B cell (primary cell): ENCODE measurements at regions of chr5 and their contacts with region 1.

Region 1: DNA sequence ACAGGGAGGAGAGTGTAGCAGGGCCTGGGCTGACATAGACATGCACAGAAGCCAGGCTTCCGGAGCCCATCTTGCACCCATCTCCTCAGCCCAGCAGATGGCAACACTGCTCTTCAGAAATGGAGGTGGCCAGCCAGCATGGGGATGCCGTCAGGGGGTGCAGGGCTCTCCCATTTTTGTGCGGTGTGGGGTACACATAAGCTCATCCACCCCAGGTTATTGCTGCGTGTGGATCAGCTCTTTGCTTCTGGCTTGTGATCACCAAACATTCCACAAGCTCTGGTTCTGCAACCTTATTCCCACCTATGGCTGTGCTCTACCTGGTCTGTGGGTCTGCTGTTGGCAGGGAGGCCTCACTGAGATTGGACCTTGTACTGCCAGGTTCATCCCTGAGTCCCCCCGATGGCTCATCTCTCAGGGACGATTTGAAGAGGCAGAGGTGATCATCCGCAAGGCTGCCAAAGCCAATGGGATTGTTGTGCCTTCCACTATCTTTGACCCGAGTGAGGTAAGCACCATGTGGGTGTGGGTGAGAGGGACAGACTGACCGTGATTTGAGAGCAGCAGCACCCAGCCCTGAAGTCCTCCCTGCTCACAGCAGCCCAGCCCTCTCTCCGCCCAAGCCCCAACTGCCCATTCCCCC is 17.3 kb downstream of the SLC22A5 start:
- DNase-seq: peak; percentile 87
- ATAC-seq: peak; percentile 86
- H3K4me3 ChIP-seq: no peak overlapping the region
- H3K4me3 Mint-ChIP-seq: no peak overlapping the region
- H3K27ac ChIP-seq: no peak overlapping the region
- H3K27ac Mint-ChIP-seq: peak overlapping the region; percentile 43
- H3K4me1 ChIP-seq: peaks cover 15 to 18% of the 10 kb centered on the region in 2 donors
- H3K4me1 Mint-ChIP-seq: peaks cover 19% of the 10 kb centered on the region
- H3K27me3 ChIP-seq: no peaks in the 10 kb centered on the region
- H3K27me3 Mint-ChIP-seq: no peaks in the 10 kb centered on the region
- CTCF ChIP-seq: peak; percentile 83

Region 2: GRCh38 chr5:130642461-130642860 is 1744.3 kb before region 1 on chr5:
- CTCF ChIA-PET with region 1: no interaction called
- POLR2A ChIA-PET with region 1: no interaction called
- intact Hi-C with region 1: no loop called
- DNase-seq: no peak
- ATAC-seq: no peak
- H3K4me3 ChIP-seq: no peak overlapping the region
- H3K4me3 Mint-ChIP-seq: no peak overlapping the region
- H3K27ac ChIP-seq: no peak overlapping the region
- H3K27ac Mint-ChIP-seq: no peak overlapping the region
- H3K4me1 ChIP-seq: no peaks in the 10 kb centered on the region
- H3K4me1 Mint-ChIP-seq: no peaks in the 10 kb centered on the region
- H3K27me3 ChIP-seq: no peaks in the 10 kb centered on the region
- H3K27me3 Mint-ChIP-seq: no peaks in the 10 kb centered on the region
- CTCF ChIP-seq: no peak

Region 3: DNA sequence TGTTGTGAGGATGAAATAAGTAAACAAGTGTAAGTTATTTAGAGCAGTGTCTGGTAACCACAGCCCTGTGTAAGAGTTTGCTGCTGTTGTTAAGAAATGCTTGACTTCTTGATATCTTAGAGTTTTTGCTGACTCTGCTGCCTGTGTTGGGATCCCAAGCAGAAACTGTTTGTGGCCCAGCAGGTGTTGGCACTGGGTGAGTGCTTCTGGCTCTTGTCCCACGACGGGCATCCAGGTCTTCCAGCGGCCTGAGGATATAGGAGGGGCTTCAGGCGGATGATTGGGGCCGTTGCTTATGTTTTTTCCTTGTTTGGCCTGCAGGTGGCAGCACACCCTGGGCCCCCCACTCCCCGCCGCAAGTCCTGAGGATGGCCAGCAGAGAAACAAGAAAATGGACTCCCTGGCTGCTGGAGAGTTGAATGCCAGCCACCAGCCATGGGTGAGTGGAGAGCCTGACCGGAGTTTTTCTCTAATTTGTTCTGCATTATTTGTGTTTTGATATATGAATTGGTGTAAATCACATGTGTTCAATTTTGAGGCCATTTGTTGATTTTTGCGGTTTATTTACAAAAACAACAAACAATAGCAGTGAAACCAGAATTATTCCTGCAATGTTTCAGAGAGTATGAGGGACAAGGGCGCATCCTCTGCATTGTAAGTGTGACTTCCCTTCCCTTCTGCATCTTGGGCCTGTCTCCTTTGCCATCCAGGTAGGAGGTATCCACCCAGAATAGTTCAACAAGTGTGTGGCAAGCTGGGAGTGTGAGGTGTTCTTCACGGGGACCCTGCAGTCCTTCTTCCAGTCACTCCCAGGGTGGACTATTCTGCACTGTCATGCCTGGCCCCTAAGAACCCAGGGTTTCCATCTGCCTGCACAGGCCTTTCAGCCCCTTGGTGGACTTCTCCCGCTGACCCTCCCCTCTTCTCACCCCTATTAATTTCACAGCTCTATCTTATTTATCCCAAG is 33.0 kb after region 1 on chr5:
- CTCF ChIA-PET with region 1: interaction called, 22 read pairs
- POLR2A ChIA-PET with region 1: no interaction called
- intact Hi-C with region 1: loop called (anchors 1 kb)
- DNase-seq: peak; percentile 81
- ATAC-seq: peak; percentile 34
- H3K4me3 ChIP-seq: peak overlapping the region in 1 of 5 experiments; percentile 51
- H3K4me3 Mint-ChIP-seq: peak overlapping the region; percentile 90
- H3K27ac ChIP-seq: peak overlapping the region; percentile 92 to 94
- H3K27ac Mint-ChIP-seq: peak overlapping the region; percentile 93
- H3K4me1 ChIP-seq: peaks cover 90 to 91% of the 10 kb centered on the region in 2 donors
- H3K4me1 Mint-ChIP-seq: peaks cover 95% of the 10 kb centered on the region
- H3K27me3 ChIP-seq: no peaks in the 10 kb centered on the region
- H3K27me3 Mint-ChIP-seq: no peaks in the 10 kb centered on the region
- CTCF ChIP-seq: peak; percentile 91

Region 4: GRCh38 chr5:132466433-132467286 is 79.9 kb after region 1 on chr5:
- CTCF ChIA-PET with region 1: interaction called, 19 read pairs
- POLR2A ChIA-PET with region 1: no interaction called
- intact Hi-C with region 1: loop called (anchors 2 kb)
- DNase-seq: peak; percentile 72
- ATAC-seq: peak; percentile 61
- H3K4me3 ChIP-seq: peak overlapping the region; percentile 10 to 53 (median 35)
- H3K4me3 Mint-ChIP-seq: peak overlapping the region; percentile 62
- H3K27ac ChIP-seq: peak overlapping the region; percentile 70 to 72
- H3K27ac Mint-ChIP-seq: peak overlapping the region; percentile 77
- H3K4me1 ChIP-seq: peaks cover 71 to 83% of the 10 kb centered on the region in 2 donors
- H3K4me1 Mint-ChIP-seq: peaks cover 85% of the 10 kb centered on the region
- H3K27me3 ChIP-seq: no peaks in the 10 kb centered on the region
- H3K27me3 Mint-ChIP-seq: no peaks in the 10 kb centered on the region
- CTCF ChIP-seq: no peak

Region 5: DNA sequence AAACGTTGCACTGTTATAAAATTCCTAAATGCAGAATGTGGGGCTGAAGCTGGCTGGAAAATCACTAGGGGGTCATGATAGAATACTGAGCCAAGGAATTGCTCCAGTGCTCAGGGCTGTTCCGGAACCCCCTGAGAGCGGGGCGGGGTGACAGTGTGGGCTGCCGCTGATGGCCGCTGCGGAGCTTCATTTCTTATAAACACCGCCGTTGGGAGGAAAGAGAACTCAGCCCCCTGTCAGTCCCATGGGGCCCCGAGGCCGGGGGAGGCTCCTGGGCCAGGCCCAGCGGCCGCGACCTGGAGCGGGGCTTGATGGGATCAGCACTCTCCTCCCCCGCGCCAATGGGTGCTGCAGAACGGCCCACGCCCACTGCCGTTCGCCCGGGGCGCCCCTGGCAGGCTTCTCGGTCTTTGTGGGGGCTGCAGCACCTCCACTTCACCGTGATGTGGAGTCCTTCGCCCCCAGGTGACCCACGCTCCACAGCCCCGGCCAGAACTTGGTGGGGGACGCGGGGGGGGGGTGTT is 109.0 kb after region 1 on chr5:
- CTCF ChIA-PET with region 1: interaction called, 528 read pairs
- POLR2A ChIA-PET with region 1: interaction called, 15 read pairs
- intact Hi-C with region 1: no loop called
- DNase-seq: peak; percentile 91
- ATAC-seq: peak; percentile 58
- H3K4me3 ChIP-seq: peak overlapping the region; percentile 42 to 91 (median 84)
- H3K4me3 Mint-ChIP-seq: peak overlapping the region; percentile 97
- H3K27ac ChIP-seq: peak overlapping the region; percentile 85 to 95
- H3K27ac Mint-ChIP-seq: peak overlapping the region; percentile 97
- H3K4me1 ChIP-seq: peaks cover 48 to 59% of the 10 kb centered on the region in 2 donors
- H3K4me1 Mint-ChIP-seq: peaks cover 68% of the 10 kb centered on the region
- H3K27me3 ChIP-seq: no peaks in the 10 kb centered on the region
- H3K27me3 Mint-ChIP-seq: no peaks in the 10 kb centered on the region
- CTCF ChIP-seq: no peak

Region 6: GRCh38 chr5:132526290-132526973 is 139.7 kb after region 1 on chr5:
- CTCF ChIA-PET with region 1: interaction called, 17 read pairs
- POLR2A ChIA-PET with region 1: interaction called, 3 read pairs
- intact Hi-C with region 1: no loop called
- DNase-seq: peak; percentile 71
- ATAC-seq: peak; percentile 53
- H3K4me3 ChIP-seq: no peak overlapping the region
- H3K4me3 Mint-ChIP-seq: peak overlapping the region; percentile 8
- H3K27ac ChIP-seq: no peak overlapping the region
- H3K27ac Mint-ChIP-seq: no peak overlapping the region
- H3K4me1 ChIP-seq: peaks cover 41 to 45% of the 10 kb centered on the region in 2 donors
- H3K4me1 Mint-ChIP-seq: peaks cover 49% of the 10 kb centered on the region
- H3K27me3 ChIP-seq: no peaks in the 10 kb centered on the region
- H3K27me3 Mint-ChIP-seq: no peaks in the 10 kb centered on the region
- CTCF ChIP-seq: peak; percentile 89

Region 7: DNA sequence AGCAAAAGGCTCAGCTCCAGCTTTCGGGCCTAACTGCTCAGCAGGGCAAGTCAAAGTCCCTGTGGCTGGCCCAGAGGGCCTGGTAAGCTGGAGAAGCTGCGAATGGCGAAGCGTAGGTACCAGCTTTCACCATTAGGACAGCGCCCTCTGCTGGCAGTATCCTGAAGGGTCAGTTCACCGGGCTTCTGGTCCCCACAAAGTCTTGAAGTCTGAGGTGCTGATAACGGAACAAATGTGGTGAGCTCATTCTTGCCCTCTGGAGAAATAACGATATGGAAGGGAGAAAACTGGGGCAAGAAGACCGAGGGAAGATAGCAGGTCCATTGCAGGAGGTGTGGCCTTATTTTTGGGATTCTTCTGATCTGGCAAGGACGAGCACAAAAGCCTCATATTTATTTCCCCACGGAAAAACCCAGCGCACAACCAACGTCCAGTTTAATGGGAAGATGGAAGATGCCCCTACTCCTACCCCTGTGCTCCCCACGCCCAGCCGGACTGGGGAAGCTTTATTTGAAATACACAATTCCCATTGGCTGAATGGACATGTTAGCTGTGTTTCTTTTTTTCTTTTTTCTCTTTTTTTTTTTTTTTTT is 433.5 kb after region 1 on chr5:
- CTCF ChIA-PET with region 1: interaction called, 36 read pairs
- POLR2A ChIA-PET with region 1: no interaction called
- intact Hi-C with region 1: loop called (anchors 1 kb)
- DNase-seq: peak; percentile 89
- ATAC-seq: peak; percentile 89
- H3K4me3 ChIP-seq: peak overlapping the region in 3 of 5 experiments; percentile 23 to 39 (median 28)
- H3K4me3 Mint-ChIP-seq: peak overlapping the region; percentile 55
- H3K27ac ChIP-seq: no peak overlapping the region
- H3K27ac Mint-ChIP-seq: no peak overlapping the region
- H3K4me1 ChIP-seq: peaks cover 27% of the 10 kb centered on the region in 2 donors
- H3K4me1 Mint-ChIP-seq: peaks cover 13% of the 10 kb centered on the region
- H3K27me3 ChIP-seq: peaks cover 0 to 54% (median 25%) of the 10 kb centered on the region in 4 experiments
- H3K27me3 Mint-ChIP-seq: peaks cover 21% of the 10 kb centered on the region
- CTCF ChIP-seq: peak; percentile 88

Region 8: GRCh38 chr5:133868946-133869518 is 1482.3 kb after region 1 on chr5:
- CTCF ChIA-PET with region 1: no interaction called
- POLR2A ChIA-PET with region 1: no interaction called
- intact Hi-C with region 1: loop called (anchors 5 kb)
- DNase-seq: peak; percentile 86
- ATAC-seq: peak; percentile 92
- H3K4me3 ChIP-seq: no peak overlapping the region
- H3K4me3 Mint-ChIP-seq: no peak overlapping the region
- H3K27ac ChIP-seq: no peak overlapping the region
- H3K27ac Mint-ChIP-seq: peak overlapping the region; percentile 12
- H3K4me1 ChIP-seq: peaks cover 24 to 37% of the 10 kb centered on the region in 2 donors
- H3K4me1 Mint-ChIP-seq: peaks cover 15% of the 10 kb centered on the region
- H3K27me3 ChIP-seq: no peaks in the 10 kb centered on the region
- H3K27me3 Mint-ChIP-seq: no peaks in the 10 kb centered on the region
- CTCF ChIP-seq: peak; percentile 90